ENCODE measurements at regions of chr21 and their contacts with region 1.

Region 1: DNA sequence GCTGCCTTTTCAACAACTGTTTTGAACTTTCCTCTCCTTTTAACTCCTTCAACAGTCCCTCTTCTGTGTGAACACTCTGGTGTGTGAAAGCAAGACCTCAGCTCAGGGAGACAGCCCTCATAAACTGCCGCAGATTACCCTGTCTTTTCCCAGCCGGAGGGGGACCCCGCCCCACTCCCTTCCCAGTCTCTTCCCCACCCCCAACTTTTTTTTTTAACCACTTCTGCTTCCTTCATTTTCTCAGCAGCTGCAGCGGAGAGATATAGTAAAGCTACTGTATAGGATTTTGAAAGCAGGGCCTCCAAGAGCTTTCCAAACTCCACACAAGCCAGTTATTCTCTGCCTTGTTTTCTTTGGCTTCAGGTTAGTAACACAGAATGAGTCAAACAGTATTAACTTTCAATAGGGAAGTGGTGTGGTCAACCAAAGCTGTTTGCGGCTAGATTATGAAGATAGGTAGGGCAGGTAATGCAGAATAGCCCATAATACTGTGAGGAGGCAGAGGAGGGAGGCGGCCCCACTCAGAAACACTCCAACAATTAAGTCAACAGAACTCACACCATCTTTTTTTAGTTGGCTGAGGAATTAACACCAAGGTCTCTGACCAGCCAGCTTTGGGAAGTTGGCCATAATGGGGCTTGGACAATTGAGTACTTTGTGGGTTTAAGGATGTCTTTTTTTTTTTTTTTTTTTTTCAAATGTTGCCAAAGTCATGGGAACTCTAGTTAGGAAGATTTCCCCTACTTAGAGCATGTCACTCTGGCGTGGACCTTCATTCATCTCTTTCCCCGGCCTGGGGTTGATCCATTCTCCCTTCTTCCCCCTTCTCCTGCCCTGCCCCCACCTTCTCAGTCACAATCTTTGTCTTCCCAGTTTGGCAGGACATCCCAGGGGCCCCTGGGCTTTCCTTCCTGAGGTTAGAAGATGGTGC is 177.0 kb downstream of the CLIC6 start:
- DNase-seq: peak; percentile 61
- ATAC-seq: peak; percentile 74
- H3K4me3 ChIP-seq: no peak overlapping the region
- H3K4me3 Mint-ChIP-seq: peak overlapping the region; percentile 58
- H3K27ac ChIP-seq: no peak overlapping the region
- H3K27ac Mint-ChIP-seq: peak overlapping the region; percentile 27
- H3K4me1 ChIP-seq: peaks cover 23 to 26% of the 10 kb centered on the region in 2 donors
- H3K4me1 Mint-ChIP-seq: peaks cover 28% of the 10 kb centered on the region
- H3K27me3 ChIP-seq: no peaks in the 10 kb centered on the region
- H3K27me3 Mint-ChIP-seq: no peaks in the 10 kb centered on the region
- CTCF ChIP-seq: no peak

Region 2: DNA sequence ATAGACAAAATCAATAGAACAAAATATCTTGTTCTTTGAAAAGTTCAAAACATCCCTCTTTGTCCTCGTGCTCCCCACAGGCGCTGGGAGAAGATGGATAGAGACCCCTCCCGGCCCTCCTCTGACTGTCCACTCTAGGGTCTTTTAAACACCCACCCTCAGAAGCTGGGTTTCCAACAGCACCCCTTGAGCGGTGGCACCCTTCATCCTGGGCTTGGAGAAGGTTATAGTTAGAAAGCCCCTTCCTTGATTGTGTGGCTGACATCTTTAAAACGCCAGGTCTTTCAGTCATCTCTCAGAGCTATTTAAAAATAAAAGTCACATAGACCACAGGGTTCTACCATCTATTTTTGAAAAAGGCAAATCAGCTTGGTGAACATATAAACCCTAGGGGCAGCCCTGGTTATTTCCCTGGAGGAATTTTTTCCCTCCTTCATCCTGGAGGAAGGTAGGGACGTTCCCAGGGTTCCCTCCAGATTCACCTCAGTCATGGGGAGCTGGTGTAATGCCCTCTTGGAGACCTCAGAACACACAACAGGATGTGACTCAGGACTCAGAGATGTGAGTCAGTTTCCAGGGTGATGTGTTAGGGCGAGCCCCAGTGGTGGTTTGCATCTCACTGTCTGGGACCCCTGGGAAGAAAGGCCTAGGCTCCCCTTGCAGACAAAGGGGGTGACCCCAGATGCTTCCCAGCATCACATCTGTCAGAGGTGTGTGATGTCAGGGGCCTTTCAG is 38.5 kb before region 1 on chr21:
- CTCF ChIA-PET with region 1: no interaction called
- POLR2A ChIA-PET with region 1: interaction called, 5 read pairs
- intact Hi-C with region 1: loop called (anchors 5 kb)
- DNase-seq: no peak
- ATAC-seq: peak; percentile 68
- H3K4me3 ChIP-seq: no peak overlapping the region
- H3K4me3 Mint-ChIP-seq: no peak overlapping the region
- H3K27ac ChIP-seq: no peak overlapping the region
- H3K27ac Mint-ChIP-seq: no peak overlapping the region
- H3K4me1 ChIP-seq: no peaks in the 10 kb centered on the region
- H3K4me1 Mint-ChIP-seq: peaks cover 28% of the 10 kb centered on the region
- H3K27me3 ChIP-seq: no peaks in the 10 kb centered on the region
- H3K27me3 Mint-ChIP-seq: no peaks in the 10 kb centered on the region
- CTCF ChIP-seq: no peak

Measured in B cell (primary cell).